ENCODE measurements at regions of chr3 and their contacts with region 1.

Region 1: GRCh38 chr3:177197041-177197727 is at the start of gene TBL1XR1:
- DNase-seq: peak; percentile 79 to 95 (median 87)
- ATAC-seq: peak; percentile 45
- H3K4me3 ChIP-seq: peak within 1 kb of the TSS; percentile 95
- H3K4me3 Mint-ChIP-seq: peak within 1 kb of the TSS; percentile 97
- H3K27ac ChIP-seq: peak within 1 kb of the TSS; percentile 82 to 98
- H3K27ac Mint-ChIP-seq: peak within 1 kb of the TSS; percentile 87
- H3K4me1 ChIP-seq: peaks cover 54% of the 10 kb centered on the region
- H3K4me1 Mint-ChIP-seq: peaks cover 59% of the 10 kb centered on the region
- H3K27me3 ChIP-seq: no peaks in the 10 kb centered on the region
- H3K27me3 Mint-ChIP-seq: no peaks in the 10 kb centered on the region
- CTCF ChIP-seq: no peak
- total RNA-seq, gene TBL1XR1: 63.2 to 67.8 TPM

Region 2: GRCh38 chr3:175914785-175915184 is 1282.4 kb before region 1 on chr3:
- CTCF ChIA-PET with region 1: no interaction called
- POLR2A ChIA-PET with region 1: no interaction called
- intact Hi-C with region 1: no loop called
- DNase-seq: no peak
- ATAC-seq: no peak
- H3K4me3 ChIP-seq: no peak overlapping the region
- H3K4me3 Mint-ChIP-seq: no peak overlapping the region
- H3K27ac ChIP-seq: no peak overlapping the region
- H3K27ac Mint-ChIP-seq: no peak overlapping the region
- H3K4me1 ChIP-seq: no peaks in the 10 kb centered on the region
- H3K4me1 Mint-ChIP-seq: no peaks in the 10 kb centered on the region
- H3K27me3 ChIP-seq: no peaks in the 10 kb centered on the region
- H3K27me3 Mint-ChIP-seq: no peaks in the 10 kb centered on the region
- CTCF ChIP-seq: no peak

Region 3: DNA sequence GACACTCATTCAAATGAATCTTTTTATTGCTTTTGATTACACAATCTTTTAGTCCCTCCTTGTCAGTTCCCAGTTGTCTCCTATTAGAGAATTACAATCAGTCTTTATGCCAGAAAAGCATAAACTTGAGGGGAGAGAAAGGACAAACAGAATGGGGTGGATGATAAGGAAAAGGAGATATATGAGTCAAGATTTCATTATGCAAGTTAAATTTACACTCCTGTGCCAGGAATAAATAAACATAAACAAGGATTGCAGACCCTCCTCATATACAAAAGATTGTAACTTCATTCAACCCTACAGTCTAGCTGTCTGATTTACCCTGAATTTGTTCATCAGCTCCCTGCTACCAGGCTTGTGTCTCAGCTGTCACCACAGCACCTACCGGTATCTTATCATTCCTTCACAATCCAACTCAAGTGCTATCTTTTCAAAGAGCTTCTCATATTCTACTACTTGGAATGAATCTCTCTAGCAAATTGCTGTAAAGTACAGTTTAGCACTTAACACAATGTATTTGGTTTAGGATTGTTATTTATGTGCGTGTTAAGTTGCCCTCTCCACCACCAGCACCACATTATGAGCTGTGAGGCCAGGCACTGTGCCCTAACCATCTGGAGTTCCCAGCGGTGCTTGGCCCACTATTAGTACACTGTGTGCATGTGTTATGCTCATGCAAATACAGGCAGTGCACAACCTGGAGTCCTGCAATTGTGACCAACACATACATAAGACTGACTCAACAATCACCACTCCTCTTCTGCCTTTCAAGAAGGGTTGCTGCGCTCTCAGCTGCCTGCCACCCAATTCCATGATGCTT is 504.0 kb before region 1 on chr3:
- CTCF ChIA-PET with region 1: no interaction called
- POLR2A ChIA-PET with region 1: no interaction called
- intact Hi-C with region 1: no loop called
- DNase-seq: no peak
- ATAC-seq: no peak
- H3K4me3 ChIP-seq: no peak overlapping the region
- H3K4me3 Mint-ChIP-seq: no peak overlapping the region
- H3K27ac ChIP-seq: no peak overlapping the region
- H3K27ac Mint-ChIP-seq: no peak overlapping the region
- H3K4me1 ChIP-seq: no peaks in the 10 kb centered on the region
- H3K4me1 Mint-ChIP-seq: no peaks in the 10 kb centered on the region
- H3K27me3 ChIP-seq: no peaks in the 10 kb centered on the region
- H3K27me3 Mint-ChIP-seq: peaks cover 4% of the 10 kb centered on the region
- CTCF ChIP-seq: no peak

Region 4: DNA sequence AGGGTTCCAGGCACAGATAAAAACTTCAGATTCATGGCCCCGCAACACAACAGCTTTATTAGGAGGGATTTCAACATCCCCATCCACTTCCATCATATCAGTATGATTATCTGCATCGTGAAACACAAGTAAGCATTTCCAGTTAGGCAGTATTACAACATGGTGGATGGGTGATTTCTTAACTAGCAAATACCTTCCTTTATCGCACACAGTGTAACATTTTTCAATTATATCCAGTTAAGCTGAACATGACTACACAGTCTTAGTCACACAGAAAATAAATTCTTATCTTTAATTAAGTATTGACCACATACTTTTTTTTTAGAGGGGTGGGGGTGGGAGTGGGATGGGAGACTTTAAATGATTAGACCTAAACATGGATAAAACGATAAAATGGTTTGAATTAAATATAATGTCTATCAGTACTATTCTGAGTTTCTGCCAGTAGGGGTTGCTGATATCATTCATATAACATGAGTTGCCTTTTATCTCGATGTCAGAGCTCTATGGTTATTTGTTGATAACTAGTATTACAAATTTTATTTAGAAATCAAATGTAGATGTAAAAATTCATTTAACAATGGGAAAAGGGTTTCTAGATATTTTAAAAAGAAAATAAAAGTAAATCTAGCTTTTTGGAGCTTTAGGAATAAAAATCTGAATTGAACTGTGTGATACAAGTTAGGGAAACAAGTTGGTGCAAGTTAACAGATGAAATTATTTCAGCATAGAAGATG is 146.5 kb before region 1 on chr3:
- CTCF ChIA-PET with region 1: interaction called, 11 read pairs
- POLR2A ChIA-PET with region 1: interaction called, 73 read pairs
- intact Hi-C with region 1: loop called (anchors 2 kb)
- DNase-seq: peak in 3 of 14 experiments; percentile 70 to 76 (median 75)
- ATAC-seq: peak; percentile 93
- H3K4me3 ChIP-seq: no peak overlapping the region
- H3K4me3 Mint-ChIP-seq: no peak overlapping the region
- H3K27ac ChIP-seq: no peak overlapping the region
- H3K27ac Mint-ChIP-seq: peak overlapping the region; percentile 70
- H3K4me1 ChIP-seq: no peaks in the 10 kb centered on the region
- H3K4me1 Mint-ChIP-seq: peaks cover 22% of the 10 kb centered on the region
- H3K27me3 ChIP-seq: no peaks in the 10 kb centered on the region
- H3K27me3 Mint-ChIP-seq: no peaks in the 10 kb centered on the region
- CTCF ChIP-seq: peak; percentile 75

Region 5: DNA sequence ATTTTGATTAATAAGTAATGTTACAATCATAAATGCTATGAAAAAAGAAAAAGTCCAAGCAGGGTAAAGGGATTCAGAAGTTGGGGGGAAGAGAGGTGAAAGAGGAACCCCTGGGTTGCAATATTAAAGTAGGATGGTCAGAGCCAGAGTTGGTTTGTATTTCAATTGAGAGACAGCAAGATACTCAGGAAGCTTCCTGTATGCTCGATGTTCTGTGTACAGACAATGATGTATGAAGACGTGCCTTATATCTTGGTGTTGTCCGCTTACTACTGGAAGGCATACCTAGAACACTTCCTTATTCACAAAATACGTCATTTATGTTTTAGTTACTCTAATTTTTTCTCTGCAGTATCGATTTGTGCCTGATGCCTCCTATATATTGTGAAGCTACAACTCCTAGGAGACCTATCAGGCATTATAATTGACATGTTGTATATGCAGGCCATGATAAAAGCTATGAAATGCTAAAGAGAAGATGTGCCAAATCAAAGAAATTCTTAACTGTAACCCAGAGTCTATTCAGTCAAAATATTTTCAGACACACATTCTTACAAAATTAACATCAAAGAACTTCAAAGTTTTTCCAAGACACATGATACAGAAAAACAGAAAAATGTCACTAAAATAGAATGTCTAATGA is 87.4 kb before region 1 on chr3:
- CTCF ChIA-PET with region 1: no interaction called
- POLR2A ChIA-PET with region 1: interaction called, 20 read pairs
- intact Hi-C with region 1: loop called in 1 of 2 experiments (anchors 2 kb)
- DNase-seq: peak in 3 of 14 experiments; percentile 53 to 62 (median 60)
- ATAC-seq: peak; percentile 94
- H3K4me3 ChIP-seq: no peak overlapping the region
- H3K4me3 Mint-ChIP-seq: peak overlapping the region; percentile 69
- H3K27ac ChIP-seq: peak overlapping the region in 1 of 2 donors; percentile 33
- H3K27ac Mint-ChIP-seq: peak overlapping the region; percentile 88
- H3K4me1 ChIP-seq: peaks cover 24% of the 10 kb centered on the region
- H3K4me1 Mint-ChIP-seq: peaks cover 76% of the 10 kb centered on the region
- H3K27me3 ChIP-seq: no peaks in the 10 kb centered on the region
- H3K27me3 Mint-ChIP-seq: no peaks in the 10 kb centered on the region
- CTCF ChIP-seq: no peak

Region 6: DNA sequence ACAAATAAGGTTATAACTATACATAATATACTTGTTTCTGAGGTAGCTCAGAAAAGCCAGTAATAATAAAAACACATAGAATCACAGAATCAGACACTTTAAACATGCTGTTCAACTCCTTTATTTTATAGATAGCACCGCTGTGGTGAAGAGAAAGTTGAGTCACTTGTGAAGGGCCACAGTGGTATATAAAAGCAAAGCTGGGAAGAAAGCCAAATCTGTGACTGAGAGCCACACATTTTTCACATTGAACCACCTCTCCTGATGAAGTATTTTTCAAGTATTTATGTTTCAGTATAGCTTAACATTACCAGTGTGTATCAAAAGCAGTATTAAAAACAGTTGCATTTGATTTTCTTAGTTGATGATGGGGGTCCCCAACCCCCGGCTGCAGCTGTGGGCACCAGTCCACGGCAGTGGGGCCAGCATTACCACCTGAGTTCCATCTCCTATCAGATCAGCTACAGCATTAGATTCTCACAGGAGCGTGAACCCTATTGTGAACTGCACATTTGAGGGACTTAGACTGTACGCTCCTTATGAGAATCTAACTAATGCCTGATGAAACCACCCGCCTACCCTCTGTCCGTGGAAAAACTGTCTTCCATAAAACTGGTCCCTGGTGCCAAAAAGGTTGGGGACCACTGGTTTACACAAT is 46.1 kb before region 1 on chr3:
- CTCF ChIA-PET with region 1: no interaction called
- POLR2A ChIA-PET with region 1: interaction called, 32 read pairs
- intact Hi-C with region 1: loop called in 1 of 2 experiments (anchors 5 kb)
- DNase-seq: peak in 4 of 14 experiments; percentile 45 to 60 (median 53)
- ATAC-seq: peak; percentile 83
- H3K4me3 ChIP-seq: no peak overlapping the region
- H3K4me3 Mint-ChIP-seq: peak overlapping the region; percentile 76
- H3K27ac ChIP-seq: no peak overlapping the region
- H3K27ac Mint-ChIP-seq: peak overlapping the region; percentile 73
- H3K4me1 ChIP-seq: peaks cover 39% of the 10 kb centered on the region
- H3K4me1 Mint-ChIP-seq: peaks cover 77% of the 10 kb centered on the region
- H3K27me3 ChIP-seq: no peaks in the 10 kb centered on the region
- H3K27me3 Mint-ChIP-seq: no peaks in the 10 kb centered on the region
- CTCF ChIP-seq: no peak

Region 7: DNA sequence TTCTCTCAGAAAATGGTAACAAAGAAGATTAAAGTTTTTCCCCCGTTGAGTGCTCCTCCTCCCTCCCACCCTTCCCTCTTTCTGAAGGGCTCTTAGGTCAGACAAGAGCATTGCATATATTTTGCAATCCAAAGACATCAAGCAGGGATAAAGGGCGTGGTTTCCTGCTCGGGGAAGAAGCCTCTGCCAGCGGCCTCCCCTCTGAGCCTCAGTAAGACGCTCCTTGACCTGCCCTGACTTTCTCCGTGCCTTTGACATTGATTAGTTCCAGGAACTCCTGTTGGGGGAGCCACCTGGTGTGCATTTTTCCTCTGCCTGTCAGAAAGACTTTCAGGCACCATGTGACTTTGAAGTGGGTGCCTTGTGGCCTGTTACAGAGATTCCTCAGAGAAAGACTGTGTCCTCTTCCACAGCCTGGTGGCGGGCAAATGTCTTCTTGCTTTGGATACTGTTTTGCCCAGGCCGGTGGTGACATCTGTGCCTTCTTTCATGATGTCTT is 87.2 kb after region 1 on chr3:
- CTCF ChIA-PET with region 1: no interaction called
- POLR2A ChIA-PET with region 1: interaction called, 4 read pairs
- intact Hi-C with region 1: loop called in 1 of 2 experiments (anchors 10 kb)
- DNase-seq: peak in 6 of 14 experiments; percentile 2 to 55 (median 34)
- ATAC-seq: peak; percentile 43
- H3K4me3 ChIP-seq: no peak overlapping the region
- H3K4me3 Mint-ChIP-seq: no peak overlapping the region
- H3K27ac ChIP-seq: no peak overlapping the region
- H3K27ac Mint-ChIP-seq: peak overlapping the region; percentile 19
- H3K4me1 ChIP-seq: peaks cover 21% of the 10 kb centered on the region
- H3K4me1 Mint-ChIP-seq: peaks cover 32% of the 10 kb centered on the region
- H3K27me3 ChIP-seq: no peaks in the 10 kb centered on the region
- H3K27me3 Mint-ChIP-seq: no peaks in the 10 kb centered on the region
- CTCF ChIP-seq: no peak

Region 8: GRCh38 chr3:177597311-177598096 is 400.3 kb after region 1 on chr3:
- CTCF ChIA-PET with region 1: no interaction called
- POLR2A ChIA-PET with region 1: interaction called, 15 read pairs
- intact Hi-C with region 1: loop called in 1 of 2 experiments (anchors 5 kb)
- DNase-seq: peak in 7 of 14 experiments; percentile 3 to 85 (median 29)
- ATAC-seq: peak; percentile 93
- H3K4me3 ChIP-seq: peak overlapping the region; percentile 8
- H3K4me3 Mint-ChIP-seq: peak overlapping the region; percentile 83
- H3K27ac ChIP-seq: peak overlapping the region; percentile 67 to 79
- H3K27ac Mint-ChIP-seq: peak overlapping the region; percentile 96
- H3K4me1 ChIP-seq: peaks cover 37% of the 10 kb centered on the region
- H3K4me1 Mint-ChIP-seq: peaks cover 84% of the 10 kb centered on the region
- H3K27me3 ChIP-seq: no peaks in the 10 kb centered on the region
- H3K27me3 Mint-ChIP-seq: no peaks in the 10 kb centered on the region
- CTCF ChIP-seq: no peak

Region 9: GRCh38 chr3:177843093-177843734 is 646.0 kb after region 1 on chr3:
- CTCF ChIA-PET with region 1: no interaction called
- POLR2A ChIA-PET with region 1: no interaction called
- intact Hi-C with region 1: no loop called
- DNase-seq: no peak
- ATAC-seq: no peak
- H3K4me3 ChIP-seq: no peak overlapping the region
- H3K4me3 Mint-ChIP-seq: no peak overlapping the region
- H3K27ac ChIP-seq: no peak overlapping the region
- H3K27ac Mint-ChIP-seq: no peak overlapping the region
- H3K4me1 ChIP-seq: no peaks in the 10 kb centered on the region
- H3K4me1 Mint-ChIP-seq: no peaks in the 10 kb centered on the region
- H3K27me3 ChIP-seq: no peaks in the 10 kb centered on the region
- H3K27me3 Mint-ChIP-seq: no peaks in the 10 kb centered on the region
- CTCF ChIP-seq: no peak